ENCODE measurements at regions of chr7 and their contacts with region 1.

Region 1: GRCh38 chr7:5665094-5666025 is 116.1 kb downstream of the RNF216 start:
- DNase-seq: peak in 4 of 5 donors; percentile 55 to 77 (median 71)
- ATAC-seq: peak; percentile 69 to 80 (median 78)
- H3K4me3 ChIP-seq: no peak overlapping the region
- H3K27ac ChIP-seq: no peak overlapping the region
- H3K4me1 ChIP-seq: peaks cover 0 to 61% (median 20%) of the 10 kb centered on the region in 12 donors
- H3K27me3 ChIP-seq: no peaks in the 10 kb centered on the region
- CTCF ChIP-seq: peak; percentile 75 to 93 (median 86)
- POLR2A ChIP-seq: no peak

Region 2: GRCh38 chr7:5382281-5382892 is 283.0 kb before region 1 on chr7:
- intact Hi-C with region 1: no loop called
- DNase-seq: no peak
- ATAC-seq: peak in 3 of 4 donors; percentile 22 to 27 (median 23)
- H3K4me3 ChIP-seq: peak overlapping the region in 1 of 12 donors; percentile 15
- H3K27ac ChIP-seq: no peak overlapping the region
- H3K4me1 ChIP-seq: peaks cover 0 to 53% (median 30%) of the 10 kb centered on the region in 12 donors
- H3K27me3 ChIP-seq: no peaks in the 10 kb centered on the region
- CTCF ChIP-seq: no peak
- POLR2A ChIP-seq: no peak

Region 3: GRCh38 chr7:5507013-5507412 is 158.3 kb before region 1 on chr7:
- intact Hi-C with region 1: loop called in 1 of 10 experiments (anchors 5 kb)
- DNase-seq: no peak
- ATAC-seq: no peak
- H3K4me3 ChIP-seq: no peak overlapping the region
- H3K27ac ChIP-seq: no peak overlapping the region
- H3K4me1 ChIP-seq: peaks cover 0 to 7% (median 0%) of the 10 kb centered on the region in 12 donors
- H3K27me3 ChIP-seq: no peaks in the 10 kb centered on the region
- CTCF ChIP-seq: no peak
- POLR2A ChIP-seq: no peak

Region 4: DNA sequence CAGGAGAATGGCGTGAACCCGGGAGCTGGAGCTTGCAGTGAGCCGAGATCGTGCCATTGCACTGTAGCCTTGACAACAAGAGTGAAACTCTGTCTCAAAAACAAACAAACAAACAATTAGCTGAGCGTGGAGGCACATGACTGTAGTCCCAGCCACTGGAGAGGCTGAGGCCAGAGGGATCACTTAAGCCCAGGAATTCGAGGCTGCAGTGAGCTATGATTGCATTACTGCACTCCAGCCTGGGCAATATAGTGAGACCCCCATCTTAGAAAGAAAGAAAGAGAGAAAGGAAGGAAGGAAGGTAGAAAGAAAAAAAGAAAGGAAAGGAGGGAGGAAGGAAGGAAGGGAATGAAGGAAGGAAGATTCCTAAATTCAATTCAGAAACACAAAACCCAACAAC is 100.5 kb before region 1 on chr7:
- intact Hi-C with region 1: loop called in 1 of 10 experiments (anchors 2 kb)
- DNase-seq: no peak
- ATAC-seq: no peak
- H3K4me3 ChIP-seq: no peak overlapping the region
- H3K27ac ChIP-seq: no peak overlapping the region
- H3K4me1 ChIP-seq: peaks cover 0 to 31% (median 25%) of the 10 kb centered on the region in 12 donors
- H3K27me3 ChIP-seq: no peaks in the 10 kb centered on the region
- CTCF ChIP-seq: no peak
- POLR2A ChIP-seq: no peak

Region 5: GRCh38 chr7:5704534-5704922 is 39.2 kb after region 1 on chr7:
- intact Hi-C with region 1: loop called in 6 of 10 experiments (anchors 5 kb)
- DNase-seq: peak; percentile 70 to 83 (median 76)
- ATAC-seq: peak; percentile 43 to 72 (median 70)
- H3K4me3 ChIP-seq: no peak overlapping the region
- H3K27ac ChIP-seq: peak overlapping the region in 4 of 12 donors; percentile 42 to 92 (median 90)
- H3K4me1 ChIP-seq: peaks cover 0 to 52% (median 30%) of the 10 kb centered on the region in 12 donors
- H3K27me3 ChIP-seq: no peaks in the 10 kb centered on the region
- CTCF ChIP-seq: peak; percentile 88 to 97 (median 91)
- POLR2A ChIP-seq: no peak

Measured in heart left ventricle (tissue), 16 donors.